Dendritic cell treated with granulocyte-macrophage colony-stimulating factor and Interleukin-4, amounts not matched to agents 40 ng/mL and 50 ng/mL, for 4 days (primary cell): ENCODE measurements at regions of chr1 and their contacts with region 1.

Region 1: GRCh38 chr1:160193091-160193819 is 2.9 kb downstream of the CASQ1 start:
- H3K4me3 Mint-ChIP-seq: no peak overlapping the region
- H3K27ac Mint-ChIP-seq: no peak overlapping the region
- H3K4me1 Mint-ChIP-seq: peaks cover 5% of the 10 kb centered on the region
- H3K27me3 Mint-ChIP-seq: peaks cover 1% of the 10 kb centered on the region

Region 2: DNA sequence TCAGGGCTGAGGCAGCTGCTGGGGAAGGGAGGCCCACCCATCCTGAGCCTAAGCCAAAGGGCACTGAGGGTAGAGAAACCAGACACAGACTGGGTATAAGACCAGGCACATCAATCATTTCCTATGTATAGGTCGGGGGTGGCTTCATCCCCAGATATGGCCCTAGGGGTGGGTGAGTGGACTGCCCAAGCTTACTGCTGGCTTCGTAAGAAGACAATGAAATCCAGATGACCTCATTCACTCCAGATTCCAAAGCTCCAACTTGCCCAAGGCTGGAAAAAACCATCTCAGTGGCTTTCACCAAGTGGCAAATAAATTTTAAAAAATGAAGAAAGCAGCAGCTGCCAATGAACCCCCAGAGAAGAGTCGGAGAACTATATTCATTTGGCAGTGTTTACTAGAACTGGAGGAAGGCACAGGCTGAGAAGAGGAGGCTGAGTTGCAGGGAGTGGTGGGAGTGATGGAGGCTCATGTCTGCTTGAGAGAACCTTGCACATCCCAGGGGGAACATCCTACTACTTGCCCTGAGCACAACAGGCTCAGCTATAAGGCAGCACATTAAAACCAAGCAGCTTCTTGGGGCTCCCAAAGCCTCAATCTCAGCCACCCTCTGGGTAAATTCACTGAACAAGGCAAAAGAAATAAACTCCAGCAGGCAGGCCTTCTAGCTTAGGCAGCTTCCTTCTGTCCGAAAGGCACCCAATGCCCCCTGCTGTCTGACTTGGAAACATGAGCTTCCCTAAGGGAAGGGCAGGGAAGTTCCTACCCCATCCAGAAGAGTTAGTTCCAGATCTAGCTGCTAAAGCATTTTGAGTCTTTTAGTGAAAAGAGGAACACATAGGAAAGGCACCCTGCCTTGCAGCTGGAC is 26.0 kb after region 1 on chr1:
- intact Hi-C with region 1: loop called (anchors 1 kb)
- H3K4me3 Mint-ChIP-seq: no peak overlapping the region
- H3K27ac Mint-ChIP-seq: no peak overlapping the region
- H3K4me1 Mint-ChIP-seq: peaks cover 29% of the 10 kb centered on the region
- H3K27me3 Mint-ChIP-seq: no peaks in the 10 kb centered on the region

Region 3: GRCh38 chr1:160251687-160252526 is 58.7 kb after region 1 on chr1:
- intact Hi-C with region 1: loop called (anchors 1 kb)
- H3K4me3 Mint-ChIP-seq: no peak overlapping the region
- H3K27ac Mint-ChIP-seq: no peak overlapping the region
- H3K4me1 Mint-ChIP-seq: no peaks in the 10 kb centered on the region
- H3K27me3 Mint-ChIP-seq: no peaks in the 10 kb centered on the region

Region 4: DNA sequence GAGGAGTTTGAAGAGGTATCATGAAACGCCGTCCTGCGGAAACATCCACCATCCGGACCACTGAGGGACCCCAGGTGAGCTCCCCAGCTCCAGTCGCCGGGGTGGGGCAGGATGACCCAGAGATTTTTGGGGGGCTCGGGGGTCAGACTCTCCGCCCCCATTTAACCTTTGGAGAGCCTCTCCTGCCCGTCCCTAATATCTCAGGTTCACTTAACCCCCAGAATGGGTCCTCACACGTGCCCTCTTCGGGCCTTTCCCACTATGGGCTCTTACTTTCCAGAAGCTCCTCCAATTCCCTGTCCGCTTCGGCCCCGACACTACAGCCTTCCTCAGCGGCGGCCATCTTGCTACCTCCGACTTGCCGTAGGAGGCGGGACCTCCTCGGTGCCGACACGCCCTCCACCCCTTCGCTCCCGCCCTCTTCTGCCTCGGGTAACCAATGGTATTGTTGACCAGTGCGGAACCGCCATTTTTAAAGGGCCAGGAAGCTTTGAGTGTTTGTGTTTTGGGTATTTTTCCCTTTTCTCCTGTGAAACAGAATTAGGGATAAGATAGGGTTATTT is 91.6 kb after region 1 on chr1 and contains the start of gene PEX19:
- intact Hi-C with region 1: loop called (anchors 5 kb)
- H3K4me3 Mint-ChIP-seq: peak within 1 kb of the TSS; percentile 99
- H3K27ac Mint-ChIP-seq: peak within 1 kb of the TSS; percentile 93
- H3K4me1 Mint-ChIP-seq: peaks cover 25% of the 10 kb centered on the region
- H3K27me3 Mint-ChIP-seq: no peaks in the 10 kb centered on the region

Region 5: DNA sequence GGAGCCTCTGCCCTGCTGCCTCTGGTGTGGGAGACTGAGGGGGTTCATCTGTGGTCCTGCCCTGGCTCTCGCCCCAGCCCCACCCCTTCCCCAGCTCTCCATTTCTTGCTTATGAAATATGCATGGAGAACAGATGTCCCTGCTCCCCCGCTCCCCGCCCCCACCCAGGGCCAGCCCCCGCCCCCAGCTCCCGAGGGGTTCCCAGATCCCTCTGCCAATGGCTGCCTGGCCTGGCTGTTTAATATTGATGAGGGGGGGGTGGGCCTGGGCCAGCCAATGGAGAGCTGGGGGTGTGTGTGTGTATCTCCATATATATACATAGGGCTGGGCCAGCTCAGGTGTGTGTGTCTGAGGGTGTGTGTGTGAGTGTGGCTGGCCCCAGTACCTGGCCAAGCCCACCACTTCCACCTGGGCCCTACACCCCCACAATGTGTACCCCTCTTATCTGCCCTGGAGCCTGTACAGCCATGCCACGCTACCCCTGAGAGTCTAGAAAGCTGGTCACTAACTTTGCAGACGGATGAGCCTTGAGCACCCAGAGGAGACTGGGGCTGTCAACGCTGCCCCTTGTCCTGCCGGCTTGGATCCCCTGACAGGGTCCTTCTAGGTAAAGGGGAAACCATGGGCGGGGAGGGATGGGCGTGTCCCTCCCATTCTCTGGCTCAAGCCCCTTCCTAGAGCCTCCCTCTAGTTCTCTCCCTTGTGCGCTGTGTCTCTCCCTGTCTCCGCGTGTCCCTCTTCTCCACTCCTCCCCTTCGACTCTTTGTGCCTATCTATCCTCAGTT is 173.7 kb after region 1 on chr1 and contains the start of gene NHLH1:
- intact Hi-C with region 1: no loop called
- H3K4me3 Mint-ChIP-seq: no peak within 1 kb of the TSS
- H3K27ac Mint-ChIP-seq: no peak within 1 kb of the TSS
- H3K4me1 Mint-ChIP-seq: peaks cover 66% of the 10 kb centered on the region
- H3K27me3 Mint-ChIP-seq: peaks cover 3% of the 10 kb centered on the region